CD8-positive, alpha-beta memory T cell (primary cell): ENCODE measurements at regions of chr11 and their contacts with region 1.

Region 1: GRCh38 chr11:62694455-62695167 is 5.3 kb upstream of the LRRN4CL start:
- DNase-seq: peak; percentile 68 to 84 (median 72)
- H3K4me3 ChIP-seq: no peak overlapping the region
- H3K4me3 Mint-ChIP-seq: no peak overlapping the region
- H3K27ac ChIP-seq: no peak overlapping the region
- H3K27ac Mint-ChIP-seq: peak overlapping the region in 5 of 8 donors; percentile 5 to 81 (median 48)
- H3K4me1 ChIP-seq: peaks cover 7% of the 10 kb centered on the region
- H3K4me1 Mint-ChIP-seq: peaks cover 5 to 8% (median 6%) of the 10 kb centered on the region in 3 donors
- H3K27me3 ChIP-seq: no peaks in the 10 kb centered on the region
- H3K27me3 Mint-ChIP-seq: peaks cover 0 to 2% of the 10 kb centered on the region in 2 donors

Region 2: GRCh38 chr11:62678770-62679696 is 15.6 kb before region 1 on chr11 and contains the start of gene UBXN1:
- CTCF ChIA-PET with region 1: interaction called, 22 read pairs
- POLR2A ChIA-PET with region 1: interaction called, 3 read pairs
- DNase-seq: peak; percentile 75 to 87 (median 81)
- H3K4me3 ChIP-seq: peak within 1 kb of the TSS; percentile 97
- H3K4me3 Mint-ChIP-seq: peak within 1 kb of the TSS; percentile 80 to 96 (median 90)
- H3K27ac ChIP-seq: peak within 1 kb of the TSS; percentile 86
- H3K27ac Mint-ChIP-seq: peak within 1 kb of the TSS; percentile 89 to 99 (median 95)
- H3K4me1 ChIP-seq: peaks cover 19% of the 10 kb centered on the region
- H3K4me1 Mint-ChIP-seq: peaks cover 26 to 38% (median 37%) of the 10 kb centered on the region in 3 donors
- H3K27me3 ChIP-seq: no peaks in the 10 kb centered on the region
- H3K27me3 Mint-ChIP-seq: no peaks in the 10 kb centered on the region
- total RNA-seq, gene UBXN1: 142 to 143 TPM

Region 3: GRCh38 chr11:62705880-62706849 is 11.6 kb after region 1 on chr11:
- CTCF ChIA-PET with region 1: interaction called, 33 read pairs
- POLR2A ChIA-PET with region 1: interaction called, 3 read pairs
- DNase-seq: peak; percentile 92 to 98 (median 95)
- H3K4me3 ChIP-seq: peak overlapping the region; percentile 88
- H3K4me3 Mint-ChIP-seq: peak overlapping the region; percentile 86 to 95 (median 89)
- H3K27ac ChIP-seq: peak overlapping the region; percentile 95
- H3K27ac Mint-ChIP-seq: peak overlapping the region; percentile 92 to 99 (median 94)
- H3K4me1 ChIP-seq: peaks cover 48% of the 10 kb centered on the region
- H3K4me1 Mint-ChIP-seq: peaks cover 36 to 49% (median 41%) of the 10 kb centered on the region in 3 donors
- H3K27me3 ChIP-seq: no peaks in the 10 kb centered on the region
- H3K27me3 Mint-ChIP-seq: no peaks in the 10 kb centered on the region

Region 4: DNA sequence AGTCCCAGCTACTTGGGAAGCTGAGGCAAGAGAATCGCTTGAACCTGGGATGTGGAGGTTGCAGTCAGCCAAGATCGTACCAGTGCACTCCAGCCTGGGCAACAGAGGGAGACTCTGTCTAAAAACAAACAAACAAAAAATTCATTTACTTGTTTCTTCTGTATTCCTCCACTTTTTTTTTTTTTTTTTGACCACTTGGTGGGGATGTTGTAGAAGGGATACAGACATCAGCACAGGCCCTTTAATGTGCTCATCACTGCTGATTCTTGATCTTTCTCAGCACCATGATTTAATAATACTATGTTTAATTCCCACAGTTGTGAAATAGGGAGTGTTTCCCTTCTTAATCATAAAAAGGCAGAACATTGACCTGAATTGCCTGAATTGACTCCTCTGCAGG is 38.2 kb after region 1 on chr11:
- CTCF ChIA-PET with region 1: no interaction called
- POLR2A ChIA-PET with region 1: no interaction called
- DNase-seq: peak in 1 of 5 donors; percentile 19
- H3K4me3 ChIP-seq: no peak overlapping the region
- H3K4me3 Mint-ChIP-seq: peak overlapping the region in 2 of 7 donors; percentile 23 to 50
- H3K27ac ChIP-seq: no peak overlapping the region
- H3K27ac Mint-ChIP-seq: peak overlapping the region in 6 of 8 donors; percentile 6 to 70 (median 15)
- H3K4me1 ChIP-seq: peaks cover 16% of the 10 kb centered on the region
- H3K4me1 Mint-ChIP-seq: peaks cover 24 to 33% (median 30%) of the 10 kb centered on the region in 3 donors
- H3K27me3 ChIP-seq: no peaks in the 10 kb centered on the region
- H3K27me3 Mint-ChIP-seq: no peaks in the 10 kb centered on the region